ENCODE measurements at regions of chr2 and their contacts with region 1.

Region 1: DNA sequence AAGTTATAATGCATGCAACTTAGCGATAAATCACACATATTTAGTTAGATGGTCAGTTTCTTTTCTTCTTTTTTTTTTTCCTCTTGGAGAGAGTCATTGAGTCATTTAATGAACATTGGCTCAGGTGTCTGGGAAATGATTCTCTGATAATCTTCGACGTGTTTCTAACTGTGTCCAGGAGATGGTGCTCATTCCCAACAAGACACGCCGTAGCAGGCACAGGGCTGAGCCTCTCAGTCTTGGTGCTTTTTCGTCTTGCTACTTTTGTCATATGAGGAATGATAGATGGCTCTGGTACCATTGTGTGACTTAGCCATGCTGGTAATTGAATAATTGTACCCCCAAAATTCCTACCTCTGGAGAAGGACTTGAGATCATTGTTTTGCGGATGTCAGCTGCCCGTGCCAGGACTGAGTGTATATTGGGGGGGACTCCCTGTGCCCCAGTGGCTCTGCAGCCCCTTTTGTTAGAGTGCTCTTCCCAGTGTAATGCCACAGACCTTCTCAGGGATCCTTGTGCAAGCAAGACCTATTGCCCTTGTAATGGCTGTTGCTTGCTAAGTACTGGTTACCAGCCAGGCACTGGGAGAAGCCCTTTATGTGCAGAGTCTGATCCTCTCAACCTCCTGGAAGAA is 107.6 kb upstream of the CYRIA start:
- DNase-seq: peak in 2 of 3 donors; percentile 25 to 55
- ATAC-seq: peak; percentile 62 to 71
- H3K4me3 ChIP-seq: no peak overlapping the region
- H3K27ac ChIP-seq: no peak overlapping the region
- H3K4me1 ChIP-seq: no peaks in the 10 kb centered on the region
- H3K27me3 ChIP-seq: no peaks in the 10 kb centered on the region

Region 2: GRCh38 chr2:16925145-16925544 is 151.9 kb after region 1 on chr2:
- intact Hi-C with region 1: no loop called
- DNase-seq: no peak
- ATAC-seq: no peak
- H3K4me3 ChIP-seq: no peak overlapping the region
- H3K27ac ChIP-seq: no peak overlapping the region
- H3K4me1 ChIP-seq: no peaks in the 10 kb centered on the region
- H3K27me3 ChIP-seq: no peaks in the 10 kb centered on the region

Region 3: DNA sequence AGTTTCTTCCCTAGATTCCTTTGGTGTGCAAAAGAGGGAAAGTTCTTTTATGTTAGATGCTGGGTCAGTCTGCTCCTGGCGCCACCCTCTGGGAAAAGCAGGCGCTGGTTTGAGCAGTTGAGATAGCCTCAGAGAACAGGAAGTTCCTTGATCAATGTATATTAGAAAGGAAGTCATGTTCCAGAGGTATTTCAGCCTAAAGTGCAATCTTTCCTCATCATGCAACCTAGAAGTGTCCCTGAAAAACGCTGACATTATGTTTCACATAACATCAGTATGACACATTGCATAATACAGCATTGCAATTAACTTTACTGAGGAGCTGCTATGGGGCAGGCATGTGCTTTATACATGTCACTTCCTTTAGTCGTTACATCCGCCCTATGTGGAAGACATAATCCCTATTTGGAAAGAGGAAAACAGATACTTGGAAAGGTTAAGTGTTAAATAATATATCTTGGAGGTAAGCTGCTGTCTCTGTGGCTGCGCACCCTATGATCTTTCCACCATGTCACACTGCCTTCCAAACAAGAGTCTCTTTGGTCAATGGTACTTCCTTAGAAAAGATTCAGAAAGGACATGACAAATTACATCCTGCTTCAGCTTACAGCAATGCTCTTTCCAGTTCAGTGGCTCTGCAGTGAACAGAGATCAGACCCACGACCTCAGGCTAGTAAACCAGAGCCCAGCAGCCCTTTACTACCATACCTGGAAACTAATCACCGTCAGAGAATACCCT is 375.4 kb after region 1 on chr2:
- intact Hi-C with region 1: loop called in 1 of 4 experiments (anchors 5 kb)
- DNase-seq: peak in 1 of 3 donors; percentile 65
- ATAC-seq: no peak
- H3K4me3 ChIP-seq: no peak overlapping the region
- H3K27ac ChIP-seq: no peak overlapping the region
- H3K4me1 ChIP-seq: no peaks in the 10 kb centered on the region
- H3K27me3 ChIP-seq: no peaks in the 10 kb centered on the region

Region 4: GRCh38 chr2:17309741-17310339 is 536.6 kb after region 1 on chr2:
- intact Hi-C with region 1: loop called in 3 of 4 experiments (anchors 5 to 10 kb)
- DNase-seq: peak in 1 of 3 donors; percentile 12
- ATAC-seq: peak; percentile 51 to 65
- H3K4me3 ChIP-seq: no peak overlapping the region
- H3K27ac ChIP-seq: no peak overlapping the region
- H3K4me1 ChIP-seq: no peaks in the 10 kb centered on the region
- H3K27me3 ChIP-seq: no peaks in the 10 kb centered on the region

Region 5: GRCh38 chr2:17672583-17673317 is 899.6 kb after region 1 on chr2:
- intact Hi-C with region 1: loop called in 3 of 4 experiments (anchors 10 kb)
- DNase-seq: no peak
- ATAC-seq: no peak
- H3K4me3 ChIP-seq: no peak overlapping the region
- H3K27ac ChIP-seq: no peak overlapping the region
- H3K4me1 ChIP-seq: no peaks in the 10 kb centered on the region
- H3K27me3 ChIP-seq: no peaks in the 10 kb centered on the region

Measured in right cardiac atrium (tissue), 5 donors.